ENCODE measurements at regions of chr3 and their contacts with region 1.

Region 1: DNA sequence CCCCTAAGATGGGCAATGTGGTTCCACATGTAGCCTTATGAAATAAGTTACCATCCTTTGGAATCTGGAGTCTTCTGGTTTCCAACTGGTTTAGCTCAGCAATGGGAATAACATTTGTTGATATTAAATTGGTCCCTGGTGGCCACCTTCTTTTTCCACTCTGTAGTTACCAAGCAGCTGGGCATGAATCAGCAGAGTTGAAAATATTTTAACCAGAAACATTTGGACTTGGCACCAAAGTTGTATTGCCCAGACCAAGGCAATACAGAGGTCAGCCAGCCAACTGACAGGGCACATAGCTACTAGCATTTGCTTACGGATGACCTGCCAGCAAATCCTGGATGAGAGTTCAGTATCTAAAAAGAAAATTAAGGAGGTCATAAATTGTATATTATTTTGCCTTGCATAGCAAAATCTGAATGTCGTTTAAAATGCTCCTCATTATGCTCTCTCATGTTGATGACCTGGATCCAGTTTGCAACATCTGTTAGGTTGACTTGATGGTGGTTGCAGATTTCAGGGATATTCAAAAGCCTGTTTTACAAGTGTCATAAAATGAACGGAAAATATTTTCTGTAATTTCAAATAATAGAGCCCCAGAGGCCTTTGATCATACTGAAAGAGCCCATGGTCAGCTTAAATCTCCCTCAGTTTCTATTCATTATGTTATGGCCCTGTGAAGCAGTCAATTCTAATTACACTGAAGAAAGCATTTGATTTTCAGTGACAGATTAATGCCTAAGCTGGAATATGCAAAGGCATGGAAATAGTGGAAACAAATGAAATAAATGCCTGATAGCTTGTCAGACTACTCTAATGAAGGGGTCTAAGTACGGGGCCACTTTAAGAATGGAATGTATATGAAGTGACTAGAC is 54.6 kb downstream of the PPM1L start:
- DNase-seq: peak; percentile 37 to 87 (median 67)
- ATAC-seq: peak; percentile 64 to 80 (median 80)
- H3K4me3 ChIP-seq: no peak overlapping the region
- H3K27ac ChIP-seq: peak overlapping the region in 2 of 3 donors; percentile 66 to 73
- H3K4me1 ChIP-seq: peaks cover 0 to 35% (median 17%) of the 10 kb centered on the region in 4 donors
- H3K27me3 ChIP-seq: no peaks in the 10 kb centered on the region
- CTCF ChIP-seq: no peak
- POLR2A ChIP-seq: no peak

Region 2: GRCh38 chr3:160869818-160870217 is 59.2 kb after region 1 on chr3:
- intact Hi-C with region 1: loop called in 1 of 2 experiments (anchors 5 kb)
- DNase-seq: peak; percentile 26 to 85 (median 70)
- ATAC-seq: peak; percentile 97 to 98 (median 98)
- H3K4me3 ChIP-seq: peak overlapping the region in 1 of 3 donors; percentile 14
- H3K27ac ChIP-seq: no peak overlapping the region
- H3K4me1 ChIP-seq: no peaks in the 10 kb centered on the region
- H3K27me3 ChIP-seq: no peaks in the 10 kb centered on the region
- CTCF ChIP-seq: peak in 1 of 4 donors; percentile 13
- POLR2A ChIP-seq: no peak